ENCODE measurements at regions of chr10 and their contacts with region 1.

Region 1: GRCh38 chr10:29304264-29305030 is 15.6 kb downstream of the LYZL1 start:
- DNase-seq: peak in 2 of 3 donors; percentile 46 to 76
- ATAC-seq: peak; percentile 88 to 91
- H3K4me3 ChIP-seq: peak overlapping the region; percentile 26
- H3K27ac ChIP-seq: peak overlapping the region; percentile 17
- H3K4me1 ChIP-seq: no peaks in the 10 kb centered on the region
- H3K27me3 ChIP-seq: no peaks in the 10 kb centered on the region

Region 2: DNA sequence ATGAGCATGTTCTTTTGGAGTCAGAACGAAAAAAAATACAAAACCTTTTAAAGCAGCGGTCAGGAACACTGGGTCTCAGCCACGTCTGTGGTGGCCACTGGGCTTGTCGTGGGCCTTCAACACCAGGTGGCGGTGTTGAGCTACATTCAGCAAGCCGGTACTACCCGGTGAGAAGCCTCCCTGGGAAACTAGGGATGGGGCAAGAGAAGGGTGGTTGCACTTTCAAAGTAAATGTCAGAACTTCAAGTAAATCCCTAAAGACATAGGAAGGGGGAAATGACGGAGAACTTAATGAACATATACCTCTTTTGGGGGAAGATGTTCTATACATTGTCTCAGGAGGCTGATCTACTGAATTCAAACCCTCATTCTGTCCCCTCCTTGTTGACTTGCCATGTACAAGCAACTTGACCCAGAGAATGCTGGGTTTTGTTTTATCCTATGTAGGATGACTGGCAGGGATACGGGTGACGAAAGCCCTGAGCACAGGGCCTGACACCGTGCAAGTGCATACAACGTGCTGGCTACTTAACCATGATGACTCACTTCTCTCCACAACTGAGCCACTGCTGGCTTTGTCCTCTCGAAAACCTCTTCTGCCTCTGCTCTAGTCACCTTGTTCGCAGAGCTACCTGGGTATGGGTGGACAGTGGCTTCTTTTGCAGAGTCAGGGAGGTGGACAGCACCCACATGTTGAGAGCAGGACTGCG is 676.1 kb before region 1 on chr10:
- intact Hi-C with region 1: loop called in 2 of 4 experiments (anchors 10 kb)
- DNase-seq: peak; percentile 85 to 93 (median 89)
- ATAC-seq: peak; percentile 90 to 91
- H3K4me3 ChIP-seq: no peak overlapping the region
- H3K27ac ChIP-seq: no peak overlapping the region
- H3K4me1 ChIP-seq: no peaks in the 10 kb centered on the region
- H3K27me3 ChIP-seq: no peaks in the 10 kb centered on the region

Region 3: GRCh38 chr10:28663576-28664313 is 640.7 kb before region 1 on chr10:
- intact Hi-C with region 1: loop called (anchors 5 to 10 kb)
- DNase-seq: peak; percentile 77 to 89 (median 88)
- ATAC-seq: peak; percentile 90 to 92
- H3K4me3 ChIP-seq: no peak overlapping the region
- H3K27ac ChIP-seq: no peak overlapping the region
- H3K4me1 ChIP-seq: no peaks in the 10 kb centered on the region
- H3K27me3 ChIP-seq: no peaks in the 10 kb centered on the region

Region 4: GRCh38 chr10:28991326-28992270 is 312.8 kb before region 1 on chr10:
- intact Hi-C with region 1: loop called in 1 of 4 experiments (anchors 10 kb)
- DNase-seq: peak; percentile 33 to 64 (median 53)
- ATAC-seq: peak; percentile 83 to 85
- H3K4me3 ChIP-seq: no peak overlapping the region
- H3K27ac ChIP-seq: no peak overlapping the region
- H3K4me1 ChIP-seq: no peaks in the 10 kb centered on the region
- H3K27me3 ChIP-seq: no peaks in the 10 kb centered on the region

Region 5: DNA sequence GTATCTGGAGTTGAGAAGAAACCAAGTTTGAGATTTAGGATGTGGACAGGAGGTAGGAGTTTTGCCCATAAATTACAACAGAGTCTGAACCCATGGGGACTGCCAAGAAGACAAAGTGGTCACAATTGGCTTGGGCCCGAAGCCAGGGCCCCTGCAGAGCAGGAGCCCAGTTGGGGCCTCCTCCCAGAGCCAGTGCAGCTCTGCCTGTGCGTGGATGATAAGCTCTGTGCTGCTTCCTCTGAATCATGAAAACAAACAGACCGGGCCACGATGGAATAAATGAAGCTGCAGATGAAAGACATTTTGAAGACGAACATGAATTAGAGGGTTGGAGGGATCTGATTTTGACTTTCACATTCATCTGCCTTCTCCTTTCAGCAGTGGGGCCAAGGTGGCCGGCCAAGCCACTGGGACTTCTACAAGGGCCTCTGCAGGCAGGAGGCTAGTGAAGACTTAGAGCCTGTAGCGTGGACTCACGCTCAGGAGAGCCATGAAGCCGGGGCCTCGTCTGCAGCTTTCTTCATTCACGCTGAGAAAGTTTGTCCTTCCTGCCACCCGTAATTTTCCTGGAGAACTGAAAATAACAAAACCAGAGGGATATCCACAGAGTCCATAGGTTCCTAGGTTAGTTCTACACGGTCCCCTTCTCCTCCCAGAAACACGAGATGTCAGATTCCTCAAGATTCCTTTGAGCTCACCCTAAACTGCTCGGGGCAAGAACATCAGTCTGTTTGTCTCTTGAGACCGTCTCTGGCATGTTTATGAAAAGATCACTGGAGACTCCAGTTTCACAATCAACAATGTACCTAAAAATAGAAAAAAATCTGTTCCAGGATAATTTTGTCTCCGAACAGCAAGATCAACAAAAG is 172.3 kb before region 1 on chr10:
- intact Hi-C with region 1: loop called in 1 of 4 experiments (anchors 10 kb)
- DNase-seq: peak; percentile 67 to 85 (median 80)
- ATAC-seq: peak; percentile 90 to 96
- H3K4me3 ChIP-seq: no peak overlapping the region
- H3K27ac ChIP-seq: peak overlapping the region; percentile 42
- H3K4me1 ChIP-seq: peaks cover 6% of the 10 kb centered on the region
- H3K27me3 ChIP-seq: no peaks in the 10 kb centered on the region